Gastrocnemius medialis (tissue), 4 donors: ENCODE measurements at regions of chr1 and their contacts with region 1.

Region 1: DNA sequence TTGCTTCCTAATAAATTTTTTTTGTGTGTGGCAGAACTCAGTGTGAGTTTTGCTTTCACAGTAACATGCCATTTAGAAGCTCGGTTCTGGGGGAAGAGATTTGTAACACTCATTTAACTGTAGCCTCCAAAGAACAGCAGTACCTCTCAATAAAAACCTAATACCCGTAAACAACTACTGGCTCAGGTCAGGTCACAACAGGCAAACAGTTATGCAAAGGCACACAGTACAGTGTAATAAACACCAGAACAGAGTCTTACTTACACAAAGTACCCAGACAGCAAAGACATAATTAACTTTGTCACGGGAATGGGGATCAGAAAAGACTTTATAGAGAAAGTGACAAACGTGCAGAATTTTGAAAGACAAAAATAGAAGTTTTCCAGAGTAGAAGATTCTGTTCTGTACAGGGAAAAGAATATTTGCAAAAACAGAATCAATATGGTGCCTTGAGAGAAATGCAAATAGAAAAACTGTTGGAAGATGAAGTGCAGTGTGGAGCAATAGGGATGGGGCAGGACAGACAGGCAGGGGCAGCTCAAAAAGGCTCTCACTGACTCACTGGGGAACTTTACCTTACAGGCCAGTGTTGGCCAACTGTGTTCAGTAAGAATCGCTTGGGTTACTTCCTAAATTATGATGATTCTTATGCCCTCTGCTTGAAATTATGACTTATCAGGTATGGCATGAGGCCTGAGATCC is 38.8 kb downstream of the EGLN1 start:
- DNase-seq: peak; percentile 62 to 83
- ATAC-seq: peak; percentile 82 to 84
- H3K4me3 ChIP-seq: peak overlapping the region in 3 of 4 donors; percentile 16 to 50 (median 33)
- H3K27ac ChIP-seq: peak overlapping the region; percentile 82 to 89 (median 89)
- H3K4me1 ChIP-seq: peaks cover 86 to 94% of the 10 kb centered on the region in 2 donors
- H3K27me3 ChIP-seq: no peaks in the 10 kb centered on the region
- CTCF ChIP-seq: no peak
- POLR2A ChIP-seq: peak in 1 of 2 donors; percentile 32

Region 2: GRCh38 chr1:231407547-231408396 is 24.5 kb after region 1 on chr1:
- in situ Hi-C with region 1: no loop called
- intact Hi-C with region 1: loop called (anchors 1 kb)
- DNase-seq: no peak
- ATAC-seq: peak in 1 of 2 donors; percentile 25
- H3K4me3 ChIP-seq: peak overlapping the region; percentile 29 to 41 (median 37)
- H3K27ac ChIP-seq: peak overlapping the region; percentile 97 to 98 (median 98)
- H3K4me1 ChIP-seq: peaks cover 77 to 86% of the 10 kb centered on the region in 2 donors
- H3K27me3 ChIP-seq: no peaks in the 10 kb centered on the region
- CTCF ChIP-seq: no peak
- POLR2A ChIP-seq: peak in 1 of 2 donors; percentile 18